ENCODE measurements at regions of chr7 and their contacts with region 1.

Region 1: GRCh38 chr7:87886875-87887274 is 10.6 kb downstream of the DBF4 start:
- DNase-seq: no peak
- ATAC-seq: no peak
- H3K4me3 Mint-ChIP-seq: no peak overlapping the region
- H3K27ac Mint-ChIP-seq: no peak overlapping the region
- H3K4me1 Mint-ChIP-seq: peaks cover 11% of the 10 kb centered on the region
- H3K27me3 Mint-ChIP-seq: no peaks in the 10 kb centered on the region

Region 2: DNA sequence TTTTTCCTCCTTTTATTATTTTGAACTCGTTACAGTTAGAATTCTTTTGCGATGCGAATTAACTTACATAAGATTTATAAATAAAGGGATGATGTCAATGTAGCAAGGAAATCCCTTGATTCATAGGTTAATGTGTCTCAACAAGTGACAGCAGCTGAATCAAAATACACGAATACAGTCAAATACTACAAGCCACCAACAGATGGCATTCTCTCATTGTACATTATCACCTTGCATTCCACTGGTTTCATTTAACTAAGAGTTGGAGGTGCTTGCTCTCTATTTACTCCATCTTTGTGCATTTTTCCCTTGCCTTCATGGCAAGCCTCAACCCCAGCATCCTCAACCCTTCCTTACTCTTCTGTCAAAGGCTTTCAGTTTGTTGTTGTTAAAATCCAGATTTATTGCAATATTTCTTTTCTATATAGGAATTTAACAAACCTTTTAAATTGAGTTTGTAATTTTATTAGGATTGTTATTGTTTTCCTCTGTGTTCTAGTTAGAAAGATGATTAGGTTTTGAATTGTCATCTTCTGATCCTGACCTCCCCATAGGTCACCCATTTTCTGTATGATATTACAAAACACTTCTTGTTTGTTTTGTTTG is 89.0 kb before region 1 on chr7:
- CTCF ChIA-PET with region 1: interaction called, 13 read pairs
- DNase-seq: no peak
- ATAC-seq: peak; percentile 67
- H3K4me3 Mint-ChIP-seq: no peak overlapping the region
- H3K27ac Mint-ChIP-seq: no peak overlapping the region
- H3K4me1 Mint-ChIP-seq: peaks cover 2% of the 10 kb centered on the region
- H3K27me3 Mint-ChIP-seq: peaks cover 16% of the 10 kb centered on the region

Region 3: DNA sequence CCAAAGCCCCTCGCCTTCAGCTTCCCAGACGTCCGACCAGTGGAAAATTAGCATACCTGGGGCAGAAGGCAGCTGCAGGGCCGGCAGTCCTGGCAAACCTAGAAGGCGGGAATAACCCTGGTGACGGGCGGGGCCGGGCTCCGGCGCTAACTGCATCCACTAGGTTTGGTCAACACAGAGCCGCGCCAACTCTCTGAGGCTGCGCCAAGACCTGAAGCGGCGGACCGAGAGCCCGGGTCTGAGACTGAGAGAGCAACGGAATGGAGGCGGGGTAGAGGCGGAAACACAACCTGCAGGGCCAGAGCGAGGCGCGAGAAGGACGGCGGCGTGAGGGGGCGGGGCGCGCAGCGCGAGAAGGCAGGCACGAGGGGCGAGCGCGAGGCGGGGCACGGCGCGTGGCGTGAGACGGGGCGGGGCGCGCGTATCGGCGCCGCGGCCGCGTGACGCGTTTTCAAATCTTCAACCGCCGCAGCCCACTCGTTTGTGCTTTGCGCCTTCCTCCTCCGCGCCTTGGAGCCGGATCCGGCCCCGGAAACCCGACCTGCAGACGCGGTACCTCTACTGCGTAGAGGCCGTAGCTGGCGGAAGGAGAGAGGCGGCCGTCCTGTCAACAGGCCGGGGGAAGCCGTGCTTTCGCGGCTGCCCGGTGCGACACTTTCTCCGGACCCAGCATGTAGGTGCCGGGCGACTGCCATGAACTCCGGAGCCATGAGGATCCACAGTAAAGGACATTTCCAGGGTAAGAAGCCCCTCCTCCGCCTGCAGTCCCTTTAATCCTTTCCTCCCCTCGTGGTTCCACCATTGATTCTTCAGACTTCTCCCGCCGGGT is 10.6 kb before region 1 on chr7 and contains the starts of genes DBF4 and SLC25A40:
- CTCF ChIA-PET with region 1: interaction called, 11 read pairs
- DNase-seq: peak; percentile 97
- ATAC-seq: peak; percentile 92
- H3K4me3 Mint-ChIP-seq: peak within 1 kb of the TSS; percentile 88
- H3K27ac Mint-ChIP-seq: peak within 1 kb of the TSS; percentile 96
- H3K4me1 Mint-ChIP-seq: peaks cover 51% of the 10 kb centered on the region
- H3K27me3 Mint-ChIP-seq: no peaks in the 10 kb centered on the region
- total RNA-seq, gene DBF4: 85.1 to 85.5 TPM
- total RNA-seq, gene SLC25A40: 42.1 to 48.7 TPM

Measured in activated CD8-positive, alpha-beta memory T cell treated with anti-CD3 and anti-CD28 coated beads, Interleukin-2, amount 10 ng/mL, durations not matched to agents 7 days and 5 days (primary cell).